Esophagus squamous epithelium (tissue), 5 donors: ENCODE measurements at regions of chr22 and their contacts with region 1.

Region 1: DNA sequence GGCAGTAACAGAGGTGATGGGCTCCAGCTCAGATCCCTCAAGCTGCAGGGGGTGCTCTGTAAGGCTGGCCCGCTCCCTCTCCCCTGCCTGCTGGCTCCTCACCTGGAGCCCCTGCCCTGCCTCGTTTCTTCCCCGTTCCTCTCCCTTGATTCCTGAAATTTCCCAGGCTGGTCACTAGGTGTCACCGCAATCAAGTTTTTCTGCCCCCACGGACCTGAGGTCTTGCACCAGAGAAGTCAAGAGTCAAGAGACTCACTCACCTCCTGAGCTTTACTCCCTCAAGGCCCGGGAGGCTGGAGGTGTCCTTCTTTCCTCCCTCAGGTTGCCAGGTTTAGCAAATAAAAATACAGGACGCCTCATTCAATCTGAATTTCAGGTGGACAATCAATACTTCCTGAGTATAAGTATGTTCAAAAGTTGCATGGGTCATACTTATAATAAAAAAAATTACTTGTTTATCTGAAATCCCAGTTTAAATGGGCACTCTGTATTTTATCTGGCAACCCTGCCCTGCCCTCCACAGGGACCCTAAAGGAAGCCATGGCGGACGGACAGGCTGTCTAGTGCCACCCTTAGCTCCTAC is 69.2 kb downstream of the SCUBE1 start:
- DNase-seq: no peak
- H3K4me3 ChIP-seq: no peak overlapping the region
- H3K27ac ChIP-seq: no peak overlapping the region
- H3K4me1 ChIP-seq: no peaks in the 10 kb centered on the region
- H3K27me3 ChIP-seq: peaks cover 0 to 39% (median 0%) of the 10 kb centered on the region in 4 donors
- CTCF ChIP-seq: peak; percentile 45 to 74 (median 66)
- POLR2A ChIP-seq: no peak

Region 2: DNA sequence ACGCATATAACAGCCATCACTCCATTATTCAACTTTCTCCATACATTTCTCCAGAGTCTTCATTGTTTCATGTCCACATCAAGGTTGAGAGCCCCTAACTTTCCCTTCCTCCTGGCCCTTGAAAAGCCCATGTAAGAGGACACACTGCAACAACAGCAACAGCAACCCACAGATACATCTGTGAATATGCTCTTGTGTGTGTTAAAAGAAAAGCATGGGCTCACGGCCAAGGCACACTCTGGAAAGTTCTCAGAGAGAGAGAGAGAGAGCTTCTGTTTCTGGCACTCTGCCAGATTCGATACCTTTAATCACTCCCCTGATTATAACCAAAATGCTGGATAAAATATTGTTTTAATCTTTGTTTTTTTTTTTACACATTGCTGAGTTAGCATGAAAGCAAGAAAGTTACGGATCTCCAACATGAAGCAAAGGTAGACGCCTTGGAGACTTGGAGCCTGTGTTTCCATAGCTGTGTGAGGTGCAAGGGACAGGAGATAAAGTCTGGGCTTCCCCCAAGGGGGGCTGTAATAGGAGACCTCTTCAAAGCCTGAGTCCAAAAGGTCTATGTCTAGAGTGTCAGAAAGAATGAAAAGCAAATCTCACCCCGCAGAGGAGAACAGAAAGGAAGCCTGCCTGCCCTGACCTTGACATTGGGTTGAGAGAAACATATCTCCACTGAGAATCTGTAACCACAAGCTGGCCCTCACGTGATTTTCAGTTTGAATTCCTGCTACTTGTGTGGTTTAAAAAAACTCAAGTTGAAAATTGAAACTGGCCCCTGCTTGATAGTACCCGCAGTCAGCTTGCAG is 104.1 kb after region 1 on chr22:
- intact Hi-C with region 1: loop called (anchors 5 kb)
- DNase-seq: no peak
- H3K4me3 ChIP-seq: no peak overlapping the region
- H3K27ac ChIP-seq: peak overlapping the region in 1 of 4 donors; percentile 11
- H3K4me1 ChIP-seq: peaks cover 0 to 17% (median 0%) of the 10 kb centered on the region in 3 donors
- H3K27me3 ChIP-seq: peaks cover 0 to 55% (median 0%) of the 10 kb centered on the region in 4 donors
- CTCF ChIP-seq: no peak
- POLR2A ChIP-seq: no peak

Region 3: GRCh38 chr22:43412808-43413795 is 139.1 kb after region 1 on chr22:
- intact Hi-C with region 1: no loop called
- DNase-seq: no peak
- H3K4me3 ChIP-seq: no peak overlapping the region
- H3K27ac ChIP-seq: no peak overlapping the region
- H3K4me1 ChIP-seq: peaks cover 0 to 7% (median 4%) of the 10 kb centered on the region in 3 donors
- H3K27me3 ChIP-seq: peaks cover 0 to 100% (median 5%) of the 10 kb centered on the region in 4 donors
- CTCF ChIP-seq: no peak
- POLR2A ChIP-seq: no peak

Region 4: DNA sequence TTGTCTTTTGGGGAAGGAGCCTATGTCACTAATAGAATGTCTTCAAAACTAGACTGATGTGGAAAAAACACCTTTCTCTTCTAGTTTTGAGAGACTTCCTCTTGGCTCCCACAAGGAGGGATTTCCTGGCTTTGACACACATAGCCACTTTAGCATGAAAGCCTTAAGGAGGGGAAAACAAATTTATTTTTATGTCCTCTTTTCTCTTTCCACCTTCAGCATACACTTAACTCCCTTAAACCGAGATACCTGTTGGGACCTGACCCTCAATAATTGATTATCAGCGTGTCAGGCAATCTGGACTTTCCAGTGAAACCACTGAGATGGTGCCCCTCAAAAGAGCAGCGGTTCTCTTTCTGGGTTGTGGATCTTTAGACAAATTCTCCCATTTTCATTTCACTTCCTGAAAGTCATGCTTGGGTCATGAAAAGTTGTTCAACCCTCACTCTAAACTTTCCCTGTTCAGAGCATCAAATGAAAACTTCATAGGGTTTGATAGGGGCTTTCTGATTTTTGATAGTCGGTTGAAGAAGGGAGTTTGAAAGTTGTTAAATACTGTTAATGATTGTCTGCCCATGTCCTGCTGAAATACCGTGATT is 529.0 kb after region 1 on chr22:
- intact Hi-C with region 1: loop called (anchors 10 kb)
- DNase-seq: no peak
- H3K4me3 ChIP-seq: no peak overlapping the region
- H3K27ac ChIP-seq: no peak overlapping the region
- H3K4me1 ChIP-seq: no peaks in the 10 kb centered on the region
- H3K27me3 ChIP-seq: peaks cover 0 to 3% (median 0%) of the 10 kb centered on the region in 4 donors
- CTCF ChIP-seq: no peak
- POLR2A ChIP-seq: no peak